Lower leg skin (tissue), 4 donors: ENCODE measurements at regions of chr15 and their contacts with region 1.

Region 1: DNA sequence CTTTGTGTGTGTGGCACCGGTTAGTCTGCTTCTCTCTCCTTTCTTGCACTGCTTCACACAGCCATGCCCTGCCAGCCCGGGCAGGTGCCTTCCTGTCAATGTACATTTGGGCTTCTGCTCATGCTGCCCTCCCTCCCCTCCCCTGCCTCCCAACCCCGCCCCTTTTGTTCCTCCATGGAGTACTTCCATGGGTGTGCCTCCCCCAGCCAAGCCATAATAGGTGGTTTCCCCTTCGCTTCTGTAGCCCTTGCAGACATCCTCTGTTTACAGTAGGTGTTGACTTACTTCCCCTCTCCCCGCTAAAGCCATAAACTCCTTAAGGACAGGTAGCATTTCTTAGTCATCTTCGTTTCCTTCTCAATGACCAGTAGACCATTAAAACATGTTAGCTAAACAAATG is 31.8 kb upstream of the CRTC3 start:
- DNase-seq: peak in 1 of 2 donors; percentile 39
- H3K4me3 ChIP-seq: no peak overlapping the region
- CTCF ChIP-seq: no peak
- POLR2A ChIP-seq: no peak

Region 2: GRCh38 chr15:90320061-90320884 is 177.6 kb before region 1 on chr15:
- intact Hi-C with region 1: loop called (anchors 10 kb)
- DNase-seq: peak; percentile 72 to 94
- H3K4me3 ChIP-seq: no peak overlapping the region
- CTCF ChIP-seq: peak in 1 of 3 donors; percentile 99
- POLR2A ChIP-seq: no peak

Region 3: DNA sequence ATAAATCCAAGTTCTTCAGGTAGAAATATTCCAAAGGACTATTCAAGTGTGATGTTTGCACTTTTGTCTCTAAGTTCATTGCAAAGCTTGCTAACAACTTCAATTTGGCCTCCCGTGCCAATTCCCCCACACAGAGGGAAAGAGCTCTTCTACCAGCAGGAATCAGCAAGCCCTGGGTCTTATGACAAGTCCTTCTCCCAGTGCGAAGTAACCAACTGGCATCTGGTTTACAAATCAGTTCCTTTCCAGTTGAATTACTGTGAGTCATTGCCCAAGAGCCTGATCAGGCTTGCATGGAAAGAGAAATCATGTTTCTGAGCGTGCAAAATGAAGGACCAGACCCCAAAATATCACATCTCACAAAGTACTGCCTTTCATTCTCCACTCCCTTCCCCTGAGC is 1292.9 kb after region 1 on chr15:
- intact Hi-C with region 1: no loop called
- DNase-seq: peak in 1 of 2 donors; percentile 32
- H3K4me3 ChIP-seq: no peak overlapping the region
- CTCF ChIP-seq: no peak
- POLR2A ChIP-seq: no peak